Panc1 (cell line): ENCODE measurements at regions of chr1 and their contacts with region 1.

Region 1: DNA sequence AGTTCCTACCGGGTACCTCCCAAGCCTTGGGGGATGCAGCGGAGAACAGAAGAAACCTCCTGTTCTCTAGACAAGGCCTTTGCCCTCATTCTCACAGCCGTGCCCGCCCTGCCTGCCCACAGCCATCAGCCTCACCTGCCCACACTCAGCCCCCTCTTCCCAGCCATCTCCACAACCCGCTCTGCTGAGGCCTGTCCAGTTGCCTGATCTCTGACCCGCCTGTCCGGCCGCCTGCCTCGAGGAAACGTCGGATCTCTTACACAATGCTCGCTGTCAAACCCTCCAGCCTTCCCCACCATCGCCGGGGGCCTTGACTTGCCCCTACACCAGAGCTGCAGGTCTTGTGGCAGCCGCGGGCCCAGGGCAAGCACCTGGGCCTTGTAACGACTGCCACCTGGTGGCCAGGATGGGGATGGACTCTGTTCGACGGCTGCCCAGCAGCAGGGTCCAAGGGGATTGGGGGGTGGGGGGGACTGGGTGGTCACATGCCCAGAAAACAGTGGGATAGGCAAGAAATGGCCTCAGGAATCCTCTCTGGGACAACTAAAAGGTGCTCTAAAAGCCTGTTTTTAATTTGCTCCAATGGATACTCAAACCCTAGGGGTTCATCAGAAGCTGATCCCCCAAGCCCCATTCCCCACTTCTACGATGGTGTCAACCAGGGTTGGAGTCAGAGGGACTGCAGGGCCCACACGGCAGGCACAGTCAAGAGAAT is 31.0 kb downstream of the SLC45A1 start:
- DNase-seq: no peak
- ATAC-seq: peak; percentile 62
- H3K4me3 ChIP-seq: no peak overlapping the region
- H3K27ac ChIP-seq: peak overlapping the region; percentile 82
- H3K4me1 ChIP-seq: peaks cover 19% of the 10 kb centered on the region
- H3K27me3 ChIP-seq: no peaks in the 10 kb centered on the region
- CTCF ChIP-seq: peak; percentile 95

Region 2: GRCh38 chr1:7975212-7975865 is 373.6 kb before region 1 on chr1:
- CTCF ChIA-PET with region 1: interaction called, 7 read pairs
- POLR2A ChIA-PET with region 1: no interaction called
- in situ Hi-C with region 1: no loop called
- intact Hi-C with region 1: loop called (anchors 5 kb)
- DNase-seq: peak; percentile 86
- ATAC-seq: peak; percentile 99
- H3K4me3 ChIP-seq: no peak overlapping the region
- H3K27ac ChIP-seq: peak overlapping the region; percentile 80
- H3K4me1 ChIP-seq: peaks cover 4% of the 10 kb centered on the region
- H3K27me3 ChIP-seq: no peaks in the 10 kb centered on the region
- CTCF ChIP-seq: peak; percentile 98

Region 3: DNA sequence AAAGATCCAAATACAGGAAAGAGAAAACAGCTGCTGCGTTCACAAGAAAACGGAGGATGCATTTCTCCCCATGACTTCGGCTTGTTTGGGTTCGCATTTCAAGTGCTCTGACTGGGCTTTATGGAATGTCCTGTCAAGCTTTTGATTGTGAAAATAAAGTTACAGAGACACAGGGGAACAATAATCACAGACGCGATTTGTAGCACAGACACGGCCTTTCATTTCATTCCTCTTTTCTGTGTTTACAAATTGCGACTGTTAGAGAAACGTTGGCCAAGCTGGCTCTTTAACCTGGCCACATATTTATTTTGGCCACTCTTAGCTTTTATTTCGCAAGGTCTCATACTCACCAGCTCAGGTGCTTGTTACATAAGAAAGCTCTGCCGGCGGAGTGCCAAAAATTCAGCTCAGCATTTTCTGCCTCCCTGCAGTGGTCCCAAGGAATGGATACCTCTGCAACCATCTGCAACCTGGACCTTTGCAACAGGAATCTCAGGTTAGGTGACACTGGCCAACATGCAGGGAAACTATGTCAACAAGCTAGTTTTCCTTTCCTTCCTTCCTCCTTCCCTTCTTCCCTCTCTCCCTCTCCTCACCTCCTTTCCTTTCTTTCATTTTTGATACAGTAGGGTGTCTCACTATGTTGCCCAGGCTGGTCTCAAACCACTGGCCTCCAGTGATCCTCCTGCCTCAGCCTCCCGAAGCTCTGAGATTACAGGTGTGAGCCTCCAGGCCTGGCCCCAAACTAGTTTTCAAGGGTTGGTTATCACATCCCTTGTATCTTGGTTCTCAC is 89.2 kb before region 1 on chr1:
- CTCF ChIA-PET with region 1: no interaction called
- POLR2A ChIA-PET with region 1: no interaction called
- in situ Hi-C with region 1: no loop called
- intact Hi-C with region 1: no loop called
- DNase-seq: peak; percentile 81
- ATAC-seq: peak; percentile 85
- H3K4me3 ChIP-seq: peak overlapping the region; percentile 4 to 25; a peak in 3 of 4 replicates
- H3K27ac ChIP-seq: peak overlapping the region; percentile 97
- H3K4me1 ChIP-seq: peaks cover 34% of the 10 kb centered on the region
- H3K27me3 ChIP-seq: no peaks in the 10 kb centered on the region
- CTCF ChIP-seq: no peak